SK-N-SH (cell line): ENCODE measurements at regions of chr2 and their contacts with region 1.

Region 1: GRCh38 chr2:218301176-218301819 is 9.0 kb upstream of the TMBIM1 start:
- DNase-seq: peak; percentile 74
- H3K4me3 ChIP-seq: peak overlapping the region in 1 of 2 experiments; percentile 27; a peak in 1 of 4 replicates
- H3K27ac ChIP-seq: no peak overlapping the region
- H3K4me1 ChIP-seq: no peaks in the 10 kb centered on the region
- H3K27me3 ChIP-seq: no peaks in the 10 kb centered on the region
- CTCF ChIP-seq: peak; percentile 94
- EP300 ChIP-seq: no peak
- RAD21 ChIP-seq: peak; percentile 95

Region 2: DNA sequence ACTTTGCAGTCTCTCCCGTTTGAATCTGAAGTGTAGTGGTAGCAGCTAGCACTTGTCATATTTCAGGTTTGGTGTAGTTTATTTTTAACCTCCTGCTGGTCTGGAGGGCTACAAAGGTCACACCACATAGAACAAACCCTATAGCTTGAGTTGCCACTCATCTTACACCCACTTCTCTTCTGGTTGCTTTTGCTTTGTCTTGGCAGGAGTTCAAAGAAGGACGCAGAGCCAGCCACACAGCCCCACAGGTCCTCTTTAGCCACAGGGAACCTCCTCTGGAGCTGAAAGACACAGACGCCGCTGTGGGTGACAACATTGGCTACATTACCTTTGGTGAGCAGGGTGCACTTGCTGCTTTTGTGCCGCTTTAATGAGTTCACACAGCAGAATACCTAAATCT is 56.1 kb before region 1 on chr2:
- CTCF ChIA-PET with region 1: no interaction called
- POLR2A ChIA-PET with region 1: no interaction called
- DNase-seq: no peak
- H3K4me3 ChIP-seq: no peak overlapping the region
- H3K27ac ChIP-seq: no peak overlapping the region
- H3K4me1 ChIP-seq: no peaks in the 10 kb centered on the region
- H3K27me3 ChIP-seq: no peaks in the 10 kb centered on the region
- CTCF ChIP-seq: no peak
- EP300 ChIP-seq: no peak
- RAD21 ChIP-seq: no peak

Region 3: GRCh38 chr2:218269899-218270720 is 31.2 kb before region 1 on chr2 and contains the starts of genes AAMP and PNKD:
- CTCF ChIA-PET with region 1: interaction called, 13 read pairs
- POLR2A ChIA-PET with region 1: no interaction called
- DNase-seq: peak; percentile 99
- H3K4me3 ChIP-seq: peak within 1 kb of the TSS; percentile 85 to 98
- H3K27ac ChIP-seq: peak within 1 kb of the TSS; percentile 86 to 88; a peak in 3 of 4 replicates
- H3K4me1 ChIP-seq: peaks cover 14 to 19% of the 10 kb centered on the region in 2 experiments; a peak in 1 of 4 replicates
- H3K27me3 ChIP-seq: no peaks in the 10 kb centered on the region
- CTCF ChIP-seq: 0 out of 2 replicates have a peak, but pooled peaks have one; percentile 8
- EP300 ChIP-seq: no peak
- RAD21 ChIP-seq: peak; percentile 29
- polyA plus RNA-seq, gene AAMP: 223 and 276 TPM in 2 replicates
- polyA plus RNA-seq, gene PNKD: 92.2 and 101 TPM in 2 replicates

Region 4: DNA sequence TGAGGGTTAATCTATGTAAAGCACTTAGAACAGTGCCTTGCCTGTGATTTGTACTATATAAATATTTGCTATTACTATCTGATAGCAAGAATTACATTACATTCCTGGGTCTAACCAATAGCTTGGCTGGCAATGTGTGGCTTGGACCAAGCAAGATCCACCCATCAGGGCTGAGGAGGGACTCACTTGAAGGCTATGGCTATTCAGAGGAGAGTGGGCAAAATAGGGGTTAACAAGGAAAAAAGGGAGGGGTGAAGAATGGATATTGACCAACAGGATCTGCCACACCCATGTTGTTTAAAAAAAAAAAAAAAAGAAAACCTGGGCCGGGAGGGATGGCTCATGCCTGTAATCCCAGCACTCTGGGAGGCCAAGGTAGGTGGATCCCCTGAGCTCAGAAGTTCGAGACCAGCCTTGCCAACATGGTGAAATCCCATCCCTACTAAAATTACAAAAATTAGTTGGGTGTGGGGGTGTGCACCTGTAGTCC is 11.0 kb after region 1 on chr2:
- CTCF ChIA-PET with region 1: interaction called, 12 read pairs
- POLR2A ChIA-PET with region 1: no interaction called
- DNase-seq: no peak
- H3K4me3 ChIP-seq: no peak overlapping the region
- H3K27ac ChIP-seq: no peak overlapping the region
- H3K4me1 ChIP-seq: no peaks in the 10 kb centered on the region
- H3K27me3 ChIP-seq: no peaks in the 10 kb centered on the region
- CTCF ChIP-seq: no peak
- EP300 ChIP-seq: no peak
- RAD21 ChIP-seq: no peak

Region 5: GRCh38 chr2:218343591-218343990 is 42.3 kb after region 1 on chr2:
- CTCF ChIA-PET with region 1: interaction called, 12 read pairs
- POLR2A ChIA-PET with region 1: no interaction called
- DNase-seq: no peak
- H3K4me3 ChIP-seq: no peak overlapping the region
- H3K27ac ChIP-seq: no peak overlapping the region
- H3K4me1 ChIP-seq: no peaks in the 10 kb centered on the region
- H3K27me3 ChIP-seq: no peaks in the 10 kb centered on the region
- CTCF ChIP-seq: no peak
- EP300 ChIP-seq: no peak
- RAD21 ChIP-seq: no peak

Region 6: GRCh38 chr2:218395797-218396687 is 94.7 kb after region 1 on chr2:
- CTCF ChIA-PET with region 1: interaction called, 31 read pairs
- POLR2A ChIA-PET with region 1: no interaction called
- DNase-seq: peak; percentile 96
- H3K4me3 ChIP-seq: peak overlapping the region; percentile 88 to 92
- H3K27ac ChIP-seq: peak overlapping the region; percentile 95 to 98
- H3K4me1 ChIP-seq: peaks cover 15 to 26% of the 10 kb centered on the region in 2 experiments; a peak in 3 of 4 replicates
- H3K27me3 ChIP-seq: no peaks in the 10 kb centered on the region
- CTCF ChIP-seq: peak; percentile 83
- EP300 ChIP-seq: no peak
- RAD21 ChIP-seq: peak; percentile 67

Region 7: GRCh38 chr2:218438601-218438995 is 137.3 kb after region 1 on chr2:
- CTCF ChIA-PET with region 1: no interaction called
- POLR2A ChIA-PET with region 1: no interaction called
- DNase-seq: no peak
- H3K4me3 ChIP-seq: no peak overlapping the region
- H3K27ac ChIP-seq: no peak overlapping the region
- H3K4me1 ChIP-seq: no peaks in the 10 kb centered on the region
- H3K27me3 ChIP-seq: no peaks in the 10 kb centered on the region
- CTCF ChIP-seq: no peak
- EP300 ChIP-seq: no peak
- RAD21 ChIP-seq: no peak